Dendritic cell treated with granulocyte-macrophage colony-stimulating factor and Interleukin-4, amounts not matched to agents 40 ng/mL and 50 ng/mL, for 4 days (primary cell): ENCODE measurements at regions of chr10 and their contacts with region 1.

Region 1: GRCh38 chr10:81018708-81019365 is 481.1 kb downstream of the SH2D4B start:
- H3K4me3 Mint-ChIP-seq: no peak overlapping the region
- H3K27ac Mint-ChIP-seq: no peak overlapping the region
- H3K4me1 Mint-ChIP-seq: peaks cover 5% of the 10 kb centered on the region
- H3K27me3 Mint-ChIP-seq: no peaks in the 10 kb centered on the region

Region 2: GRCh38 chr10:80662577-80663261 is 356.1 kb before region 1 on chr10:
- intact Hi-C with region 1: loop called (anchors 10 kb)
- H3K4me3 Mint-ChIP-seq: peak overlapping the region; percentile 37
- H3K27ac Mint-ChIP-seq: no peak overlapping the region
- H3K4me1 Mint-ChIP-seq: peaks cover 19% of the 10 kb centered on the region
- H3K27me3 Mint-ChIP-seq: peaks cover 5% of the 10 kb centered on the region

Region 3: DNA sequence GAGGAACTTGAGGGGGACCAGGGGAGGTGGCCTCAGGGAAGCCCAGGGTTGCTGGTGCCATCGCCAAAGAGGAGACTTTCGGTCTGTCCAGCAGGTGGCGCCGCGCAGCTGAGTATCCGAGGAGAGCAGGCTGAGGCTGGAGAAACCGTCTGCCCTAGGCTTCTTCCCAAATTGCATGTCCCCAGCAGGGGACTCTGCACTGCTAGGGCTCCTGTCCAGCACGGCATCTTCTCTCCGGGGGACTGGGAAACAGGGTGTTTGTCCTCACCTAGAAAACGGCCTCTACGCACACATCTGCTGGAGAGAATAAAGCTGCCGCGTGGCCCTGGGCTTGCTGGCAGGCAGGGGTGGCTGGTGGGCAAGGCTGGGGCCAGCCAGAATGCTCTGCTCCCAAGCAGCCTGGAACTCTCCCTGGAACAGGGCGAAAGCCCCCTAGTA is 319.2 kb before region 1 on chr10:
- intact Hi-C with region 1: loop called (anchors 5 kb)
- H3K4me3 Mint-ChIP-seq: no peak overlapping the region
- H3K27ac Mint-ChIP-seq: no peak overlapping the region
- H3K4me1 Mint-ChIP-seq: no peaks in the 10 kb centered on the region
- H3K27me3 Mint-ChIP-seq: peaks cover 3% of the 10 kb centered on the region

Region 4: DNA sequence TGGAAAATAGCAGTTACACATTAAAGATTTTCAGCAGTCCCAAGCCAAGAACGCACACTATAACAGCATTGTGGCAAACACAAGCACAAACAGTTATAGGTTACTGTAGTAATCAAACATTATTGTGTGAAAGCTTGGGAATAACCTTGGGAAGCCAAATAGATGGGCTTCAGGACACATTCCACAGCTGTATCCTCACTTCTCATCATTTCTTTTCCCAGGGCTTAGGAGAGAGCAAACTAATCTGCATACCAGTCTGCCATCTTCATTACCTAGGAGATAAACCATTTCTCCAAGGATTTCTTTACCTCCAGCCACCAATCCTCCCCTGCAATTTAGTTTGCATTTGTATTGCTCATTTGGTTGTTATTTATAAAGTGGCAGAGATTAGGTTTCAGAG is 128.7 kb before region 1 on chr10:
- intact Hi-C with region 1: no loop called
- H3K4me3 Mint-ChIP-seq: no peak overlapping the region
- H3K27ac Mint-ChIP-seq: no peak overlapping the region
- H3K4me1 Mint-ChIP-seq: no peaks in the 10 kb centered on the region
- H3K27me3 Mint-ChIP-seq: no peaks in the 10 kb centered on the region

Region 5: GRCh38 chr10:81182296-81182695 is 163.5 kb after region 1 on chr10:
- intact Hi-C with region 1: no loop called
- H3K4me3 Mint-ChIP-seq: no peak overlapping the region
- H3K27ac Mint-ChIP-seq: no peak overlapping the region
- H3K4me1 Mint-ChIP-seq: no peaks in the 10 kb centered on the region
- H3K27me3 Mint-ChIP-seq: no peaks in the 10 kb centered on the region